ENCODE measurements at regions of chr16 and their contacts with region 1.

Region 1: GRCh38 chr16:57447186-57447962 is at the starts of genes CIAPIN1 and COQ9:
- DNase-seq: peak; percentile 92
- ATAC-seq: peak; percentile 100
- H3K4me3 Mint-ChIP-seq: peak within 1 kb of the TSS; percentile 97
- H3K27ac Mint-ChIP-seq: peak within 1 kb of the TSS; percentile 89
- H3K4me1 Mint-ChIP-seq: peaks cover 24% of the 10 kb centered on the region
- H3K27me3 Mint-ChIP-seq: no peaks in the 10 kb centered on the region
- total RNA-seq, gene CIAPIN1: 36.7 to 37.7 TPM
- total RNA-seq, gene COQ9: 37.1 to 40.3 TPM

Region 2: GRCh38 chr16:57416122-57416509 is 31.3 kb before region 1 on chr16:
- POLR2A ChIA-PET with region 1: interaction called, 10 read pairs
- DNase-seq: no peak
- ATAC-seq: no peak
- H3K4me3 Mint-ChIP-seq: no peak overlapping the region
- H3K27ac Mint-ChIP-seq: no peak overlapping the region
- H3K4me1 Mint-ChIP-seq: peaks cover 18% of the 10 kb centered on the region
- H3K27me3 Mint-ChIP-seq: no peaks in the 10 kb centered on the region

Region 3: DNA sequence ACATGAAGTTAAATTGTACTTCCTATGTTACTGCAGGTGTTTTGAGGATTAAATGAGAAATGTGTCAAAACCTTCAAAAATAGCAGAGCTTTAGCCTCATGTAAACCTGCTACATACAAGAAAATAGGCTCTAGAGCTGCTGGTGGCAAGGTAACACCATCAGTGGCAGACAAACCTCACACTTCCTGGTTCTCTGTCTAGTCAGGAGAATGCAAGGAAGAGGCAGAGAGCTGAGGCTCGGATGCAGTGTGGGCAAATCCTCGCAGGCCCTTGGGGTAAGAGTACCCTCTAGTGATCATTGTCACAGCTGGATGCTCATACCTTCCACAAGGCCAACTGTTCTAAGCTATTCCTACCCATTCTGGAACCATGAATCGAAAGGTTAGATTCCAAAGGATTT is 14.4 kb before region 1 on chr16:
- POLR2A ChIA-PET with region 1: interaction called, 17 read pairs
- DNase-seq: no peak
- ATAC-seq: peak; percentile 65
- H3K4me3 Mint-ChIP-seq: no peak overlapping the region
- H3K27ac Mint-ChIP-seq: peak overlapping the region; percentile 51
- H3K4me1 Mint-ChIP-seq: peaks cover 3% of the 10 kb centered on the region
- H3K27me3 Mint-ChIP-seq: no peaks in the 10 kb centered on the region

Region 4: GRCh38 chr16:57462209-57462977 is 15.0 kb after region 1 on chr16 and contains the start of gene POLR2C:
- POLR2A ChIA-PET with region 1: interaction called, 34 read pairs
- DNase-seq: peak; percentile 97
- ATAC-seq: peak; percentile 90
- H3K4me3 Mint-ChIP-seq: peak within 1 kb of the TSS; percentile 100
- H3K27ac Mint-ChIP-seq: peak within 1 kb of the TSS; percentile 100
- H3K4me1 Mint-ChIP-seq: peaks cover 28% of the 10 kb centered on the region
- H3K27me3 Mint-ChIP-seq: no peaks in the 10 kb centered on the region
- total RNA-seq, gene POLR2C: 61.1 to 63.6 TPM

Measured in activated naive CD8-positive, alpha-beta T cell treated with anti-CD3 and anti-CD28 coated beads, Interleukin-2, amount 10 ng/mL, durations not matched to agents 7 days and 5 days (primary cell).